ENCODE measurements at regions of chr1 and their contacts with region 1.

Region 1: DNA sequence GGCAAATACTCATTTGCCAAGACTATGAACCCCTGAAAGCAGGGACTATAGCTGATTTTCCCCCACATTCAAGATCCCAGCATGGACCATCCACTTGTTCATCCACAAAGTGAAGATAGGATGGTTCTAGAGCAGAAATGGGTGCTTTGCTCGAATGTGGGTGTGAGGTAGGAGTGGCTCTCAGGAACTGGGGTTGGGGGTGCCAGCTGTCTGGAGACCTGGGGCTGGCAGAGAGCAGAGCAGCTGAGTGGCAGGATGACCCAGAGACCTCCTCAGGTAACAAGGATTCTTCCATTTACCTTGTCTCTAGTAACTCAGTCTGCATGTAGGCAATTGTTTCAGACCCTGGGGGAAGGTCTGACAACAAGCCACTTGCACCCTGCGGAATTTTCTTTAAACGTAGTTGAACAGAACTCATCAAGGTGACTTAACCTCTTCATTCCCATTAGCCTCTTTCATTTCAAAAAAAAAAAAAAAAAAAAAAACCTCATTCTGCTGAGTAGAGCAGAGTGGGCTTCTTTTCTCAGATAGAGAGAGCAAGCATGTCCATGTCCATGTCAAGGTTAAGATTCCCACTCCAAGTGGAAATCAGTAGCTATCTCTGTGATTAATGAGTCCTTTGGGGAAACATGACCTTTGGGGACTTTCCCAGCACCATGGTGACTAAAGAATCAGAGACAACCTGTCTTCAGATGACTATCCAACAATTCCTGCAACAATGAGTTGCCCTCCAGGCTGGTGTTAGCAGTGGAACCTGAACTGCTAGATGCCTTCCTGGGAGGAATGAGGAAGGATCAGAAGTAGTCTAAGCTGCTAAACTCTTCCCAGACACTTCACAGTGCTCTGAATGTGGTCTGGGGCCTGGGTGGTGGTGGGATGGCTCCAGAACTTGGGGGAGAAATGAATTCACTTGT is 6.2 kb downstream of the S100A9 start:
- DNase-seq: no peak
- ATAC-seq: no peak
- H3K4me3 ChIP-seq: no peak overlapping the region
- H3K4me3 Mint-ChIP-seq: no peak overlapping the region
- H3K27ac ChIP-seq: no peak overlapping the region
- H3K27ac Mint-ChIP-seq: no peak overlapping the region
- H3K4me1 ChIP-seq: no peaks in the 10 kb centered on the region
- H3K4me1 Mint-ChIP-seq: no peaks in the 10 kb centered on the region
- H3K27me3 ChIP-seq: peaks cover 0 to 13% of the 10 kb centered on the region in 2 experiments
- H3K27me3 Mint-ChIP-seq: peaks cover 14% of the 10 kb centered on the region in 2 donors

Region 2: DNA sequence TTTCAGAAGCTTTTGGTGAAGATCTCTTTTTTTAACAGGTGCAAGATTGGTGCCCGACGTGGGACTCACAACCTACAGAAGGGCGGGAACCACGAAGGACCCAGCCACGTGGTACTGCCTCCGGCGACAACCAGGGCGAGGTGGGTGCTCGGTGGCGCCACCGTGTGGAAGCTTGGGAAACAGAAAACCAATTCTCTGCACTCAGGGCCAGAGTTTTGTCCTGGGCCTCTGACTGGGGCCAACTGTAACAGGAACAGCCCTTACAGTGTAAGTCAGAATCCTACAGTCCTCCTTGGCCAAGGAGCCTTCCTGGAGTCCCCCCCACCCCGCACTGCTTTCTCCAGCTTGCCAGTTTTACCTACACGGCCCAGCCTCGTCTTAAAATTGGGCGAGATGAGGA is 40.9 kb after region 1 on chr1:
- CTCF ChIA-PET with region 1: interaction called in 1 of 2 experiments, 12 read pairs
- POLR2A ChIA-PET with region 1: no interaction called
- DNase-seq: peak in 32 of 35 experiments; percentile 14 to 60 (median 41)
- ATAC-seq: peak; percentile 46 to 61 (median 59)
- H3K4me3 ChIP-seq: no peak overlapping the region
- H3K4me3 Mint-ChIP-seq: no peak overlapping the region
- H3K27ac ChIP-seq: no peak overlapping the region
- H3K27ac Mint-ChIP-seq: no peak overlapping the region
- H3K4me1 ChIP-seq: peaks cover 0 to 8% of the 10 kb centered on the region in 2 experiments
- H3K4me1 Mint-ChIP-seq: peaks cover 26 to 29% (median 27%) of the 10 kb centered on the region in 3 donors
- H3K27me3 ChIP-seq: peaks cover 0 to 21% of the 10 kb centered on the region in 2 experiments
- H3K27me3 Mint-ChIP-seq: peaks cover 10 to 33% of the 10 kb centered on the region in 2 donors

Region 3: GRCh38 chr1:153422450-153423068 is 58.7 kb after region 1 on chr1:
- CTCF ChIA-PET with region 1: no interaction called
- POLR2A ChIA-PET with region 1: no interaction called
- DNase-seq: peak in 32 of 35 experiments; percentile 16 to 83 (median 57)
- ATAC-seq: peak in 2 of 4 experiments; percentile 43 to 51
- H3K4me3 ChIP-seq: no peak overlapping the region
- H3K4me3 Mint-ChIP-seq: no peak overlapping the region
- H3K27ac ChIP-seq: no peak overlapping the region
- H3K27ac Mint-ChIP-seq: no peak overlapping the region
- H3K4me1 ChIP-seq: no peaks in the 10 kb centered on the region
- H3K4me1 Mint-ChIP-seq: no peaks in the 10 kb centered on the region
- H3K27me3 ChIP-seq: peaks cover 0 to 29% of the 10 kb centered on the region in 2 experiments
- H3K27me3 Mint-ChIP-seq: peaks cover 46 to 66% of the 10 kb centered on the region in 2 donors